ENCODE measurements at regions of chr17 and their contacts with region 1.

Region 1: GRCh38 chr17:81599719-81600486 is 37.0 kb downstream of the NPLOC4 start:
- DNase-seq: no peak
- H3K4me3 ChIP-seq: no peak overlapping the region
- H3K27ac ChIP-seq: no peak overlapping the region
- H3K4me1 ChIP-seq: peaks cover 5 to 26% (median 5%) of the 10 kb centered on the region in 3 donors
- H3K27me3 ChIP-seq: no peaks in the 10 kb centered on the region
- CTCF ChIP-seq: no peak
- POLR2A ChIP-seq: no peak

Region 2: GRCh38 chr17:81267390-81268067 is 332.4 kb before region 1 on chr17:
- intact Hi-C with region 1: loop called (anchors 10 kb)
- DNase-seq: no peak
- H3K4me3 ChIP-seq: no peak overlapping the region
- H3K27ac ChIP-seq: no peak overlapping the region
- H3K4me1 ChIP-seq: no peaks in the 10 kb centered on the region
- H3K27me3 ChIP-seq: no peaks in the 10 kb centered on the region
- CTCF ChIP-seq: no peak
- POLR2A ChIP-seq: no peak

Region 3: DNA sequence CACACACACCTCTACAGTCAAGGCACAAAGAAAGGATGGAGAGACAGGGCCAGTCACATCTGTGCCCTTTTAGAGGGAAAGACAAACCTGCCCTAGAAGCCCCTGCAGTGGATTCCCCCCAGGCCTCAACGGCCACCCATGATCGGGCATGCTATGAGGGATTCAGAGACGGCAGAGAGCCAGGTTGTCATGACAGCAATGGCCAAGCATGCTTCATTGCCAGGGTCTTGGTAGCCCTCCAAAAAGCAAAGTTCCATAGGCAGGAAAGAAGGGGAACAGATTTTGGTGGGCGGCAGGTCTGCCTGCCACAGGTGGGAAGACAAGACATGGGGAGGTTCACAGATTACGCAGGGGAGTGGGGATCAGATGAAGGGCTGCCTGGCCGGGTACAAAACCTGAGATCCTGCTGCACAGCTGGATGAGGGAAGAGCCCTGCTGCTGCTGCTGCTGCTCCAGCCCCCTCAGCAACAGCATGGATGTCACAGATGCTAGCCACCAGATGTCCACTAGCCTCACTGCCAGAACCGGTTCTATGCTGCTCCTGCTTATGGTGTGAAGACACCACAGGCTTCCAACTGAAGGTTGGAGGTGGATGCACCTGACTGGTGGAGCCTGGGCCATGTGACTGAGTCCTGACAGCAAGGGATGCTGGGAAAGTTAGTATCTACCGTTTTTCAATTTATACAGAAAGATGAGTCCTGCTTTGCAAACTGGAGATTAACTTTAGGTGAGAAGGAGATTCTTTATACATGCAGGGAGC is 105.1 kb before region 1 on chr17:
- intact Hi-C with region 1: no loop called
- DNase-seq: no peak
- H3K4me3 ChIP-seq: no peak overlapping the region
- H3K27ac ChIP-seq: no peak overlapping the region
- H3K4me1 ChIP-seq: no peaks in the 10 kb centered on the region
- H3K27me3 ChIP-seq: peaks cover 0 to 32% (median 0%) of the 10 kb centered on the region in 4 donors
- CTCF ChIP-seq: no peak
- POLR2A ChIP-seq: no peak

Measured in esophagus squamous epithelium (tissue), 5 donors.